Activated naive CD4-positive, alpha-beta T cell treated with anti-CD3 and anti-CD28 coated beads for 36 hours (primary cell): ENCODE measurements at regions of chr10 and their contacts with region 1.

Region 1: GRCh38 chr10:132684164-132684891 is 101.6 kb downstream of the NKX6-2 start:
- DNase-seq: peak; percentile 70
- H3K4me3 Mint-ChIP-seq: no peak overlapping the region
- H3K27ac Mint-ChIP-seq: peak overlapping the region; percentile 46
- H3K4me1 Mint-ChIP-seq: peaks cover 19% of the 10 kb centered on the region
- H3K27me3 Mint-ChIP-seq: no peaks in the 10 kb centered on the region

Region 2: DNA sequence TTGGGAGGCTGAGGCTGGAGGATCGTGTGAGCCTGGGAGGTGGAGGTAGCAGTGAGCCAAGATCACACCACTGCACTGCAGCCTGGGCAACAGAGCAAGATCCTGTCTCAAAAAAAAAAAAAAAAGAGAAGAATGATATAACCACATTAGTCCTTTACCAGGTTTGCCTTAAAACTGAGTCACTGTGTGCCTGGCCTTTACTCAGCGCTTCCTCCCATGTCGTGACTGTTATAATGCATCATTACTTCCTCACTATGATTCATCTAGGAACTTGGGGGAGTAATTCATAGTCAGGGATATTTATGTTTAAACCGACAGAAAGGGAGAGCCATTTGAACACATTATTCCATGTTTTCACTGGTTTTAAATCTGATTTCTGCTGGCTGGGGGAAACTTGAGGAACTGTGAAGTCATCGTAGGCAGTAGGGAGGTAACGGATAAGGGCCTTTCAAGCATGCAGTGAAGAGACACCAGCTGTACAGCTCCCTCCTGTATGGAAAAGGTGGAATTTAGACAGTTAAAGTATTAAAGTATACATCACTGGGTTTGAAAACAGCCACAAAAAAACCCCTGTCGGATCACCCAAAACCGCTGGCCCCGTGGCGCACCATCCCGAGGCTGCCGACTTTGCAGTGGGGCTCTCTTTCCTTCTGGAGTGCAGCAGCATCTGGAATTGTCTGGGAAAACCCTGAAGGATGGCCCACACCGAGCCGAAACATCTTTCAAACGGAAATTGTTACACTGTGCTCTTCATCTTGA is 18.2 kb before region 1 on chr10:
- CTCF ChIA-PET with region 1: interaction called, 3 read pairs
- intact Hi-C with region 1: loop called (anchors 1 kb)
- DNase-seq: peak; percentile 60
- H3K4me3 Mint-ChIP-seq: no peak overlapping the region
- H3K27ac Mint-ChIP-seq: no peak overlapping the region
- H3K4me1 Mint-ChIP-seq: peaks cover 11% of the 10 kb centered on the region
- H3K27me3 Mint-ChIP-seq: no peaks in the 10 kb centered on the region

Region 3: DNA sequence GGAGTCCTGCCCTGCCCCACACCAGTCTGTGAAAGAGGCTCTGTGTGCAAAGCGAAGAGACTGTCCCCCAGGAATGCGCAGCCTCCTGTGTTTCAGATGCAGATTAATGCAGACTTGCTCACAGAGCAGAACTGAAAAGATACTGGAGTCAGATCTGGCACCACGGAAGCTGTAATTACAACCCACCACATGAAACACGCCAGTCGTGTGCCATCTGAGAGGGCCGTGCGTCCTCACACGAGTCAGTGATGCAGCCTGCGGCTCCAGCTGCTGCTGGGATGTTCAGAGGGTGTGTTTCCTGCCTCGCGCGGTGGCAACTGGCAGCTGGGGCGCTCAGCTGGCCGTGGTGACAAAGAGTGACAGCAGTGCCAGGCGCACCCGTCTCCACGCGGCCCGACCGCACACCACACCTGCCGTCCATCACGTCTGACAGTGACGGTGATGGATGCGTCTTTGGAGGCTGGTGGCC is 51.6 kb after region 1 on chr10:
- CTCF ChIA-PET with region 1: no interaction called
- intact Hi-C with region 1: no loop called
- DNase-seq: no peak
- H3K4me3 Mint-ChIP-seq: no peak overlapping the region
- H3K27ac Mint-ChIP-seq: no peak overlapping the region
- H3K4me1 Mint-ChIP-seq: no peaks in the 10 kb centered on the region
- H3K27me3 Mint-ChIP-seq: no peaks in the 10 kb centered on the region